ENCODE measurements at regions of chr2 and their contacts with region 1.

Region 1: DNA sequence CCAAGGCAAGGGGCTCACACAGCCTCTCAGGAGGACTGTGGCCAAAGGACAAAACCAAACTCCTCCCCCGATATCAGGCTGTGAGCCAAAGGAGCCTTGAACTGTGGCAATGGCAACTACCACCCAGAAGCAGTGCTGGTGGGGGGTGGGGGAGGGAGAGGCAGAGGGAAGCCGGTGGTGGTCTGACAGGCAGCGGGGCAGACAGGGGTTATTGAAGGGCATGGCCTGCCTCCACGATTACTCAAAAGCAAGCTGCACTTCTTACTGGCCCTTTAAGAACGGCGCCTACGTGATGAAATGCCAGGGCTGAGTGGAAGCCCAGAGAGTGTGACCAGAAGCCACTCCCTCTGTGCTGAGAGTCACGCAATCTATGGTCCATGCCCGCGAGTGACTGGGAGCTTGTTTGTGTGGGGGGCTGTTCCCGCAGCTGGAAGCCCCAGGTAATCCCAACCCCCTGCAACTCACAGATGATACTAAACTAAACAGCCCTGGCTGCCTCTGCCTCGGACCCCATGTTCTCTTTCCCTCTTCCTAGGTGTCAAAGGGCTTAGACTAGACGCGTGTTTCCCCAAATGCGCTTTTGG is 128.2 kb upstream of the CXCR4 start:
- DNase-seq: peak in 1 of 2 donors; percentile 57
- ATAC-seq: peak in 1 of 2 donors; percentile 60
- H3K4me3 ChIP-seq: no peak overlapping the region
- H3K27ac ChIP-seq: no peak overlapping the region
- H3K4me1 ChIP-seq: peaks cover 0 to 8% of the 10 kb centered on the region in 2 donors
- H3K27me3 ChIP-seq: no peaks in the 10 kb centered on the region
- CTCF ChIP-seq: no peak
- POLR2A ChIP-seq: no peak

Region 2: DNA sequence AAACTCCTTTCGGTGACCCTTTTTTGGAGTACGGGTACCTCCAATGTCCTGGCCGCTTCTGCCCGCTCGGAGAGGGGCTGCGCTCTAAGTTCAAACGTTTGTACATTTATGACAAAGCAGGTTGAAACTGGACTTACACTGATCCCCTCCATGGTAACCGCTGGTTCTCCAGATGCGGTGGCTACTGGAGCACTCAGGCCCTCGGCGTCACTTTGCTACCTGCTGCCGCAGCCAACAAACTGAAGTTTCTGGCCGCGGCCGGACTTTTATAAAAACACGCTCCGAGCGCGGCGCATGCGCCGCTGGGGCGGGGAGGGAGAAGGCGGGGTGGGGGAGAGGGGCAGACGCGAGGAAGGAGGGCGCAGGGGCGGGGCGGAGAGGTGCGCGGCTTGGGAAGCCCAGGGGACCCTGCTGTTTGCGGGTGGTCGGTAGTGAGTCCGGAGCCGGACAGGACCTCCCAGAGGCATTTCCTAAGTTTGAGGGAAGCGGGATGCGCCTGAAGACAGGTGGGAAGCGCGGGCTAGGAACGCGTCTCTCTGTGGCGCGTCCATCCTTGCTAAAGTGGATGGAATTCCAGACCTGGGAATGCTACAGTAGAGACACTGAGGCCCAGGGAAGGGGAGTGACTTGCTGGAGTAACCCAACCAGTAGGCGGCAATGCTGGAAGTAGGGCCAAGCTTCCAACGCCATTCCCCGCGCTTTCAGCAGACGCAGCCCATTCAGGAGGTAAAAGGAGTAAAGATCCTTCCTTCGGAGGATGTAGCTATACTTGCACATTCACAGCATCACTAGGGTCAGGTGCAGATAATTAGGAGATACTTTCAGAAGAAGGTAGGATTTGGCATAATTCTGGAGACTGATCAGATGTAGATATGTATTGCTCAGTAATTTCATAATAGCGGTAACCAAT is 128.0 kb before region 1 on chr2 and contains the start of gene CXCR4:
- in situ Hi-C with region 1: no loop called
- intact Hi-C with region 1: loop called (anchors 5 kb)
- DNase-seq: peak in 1 of 2 donors; percentile 28
- ATAC-seq: peak; percentile 16 to 20
- H3K4me3 ChIP-seq: peak within 1 kb of the TSS; percentile 48 to 67 (median 56)
- H3K27ac ChIP-seq: peak within 1 kb of the TSS in 1 of 4 donors; percentile 57
- H3K4me1 ChIP-seq: peaks cover 4 to 34% of the 10 kb centered on the region in 2 donors
- H3K27me3 ChIP-seq: peaks cover 40 to 91% (median 54%) of the 10 kb centered on the region in 3 donors
- CTCF ChIP-seq: no peak
- POLR2A ChIP-seq: peak; percentile 26 to 51
- total RNA-seq, gene CXCR4: 2.5 to 6.6 (median 4.0) TPM

Measured in gastrocnemius medialis (tissue), 4 donors.